Activated CD8-positive, alpha-beta T cell treated with anti-CD3 and anti-CD28 coated beads for 36 hours (primary cell): ENCODE measurements at regions of chr19 and their contacts with region 1.

Region 1: GRCh38 chr19:15297416-15298224 is 34.7 kb downstream of the BRD4 start:
- DNase-seq: peak; percentile 52
- ATAC-seq: peak; percentile 10
- H3K4me3 Mint-ChIP-seq: peak overlapping the region; percentile 38
- H3K27ac Mint-ChIP-seq: peak overlapping the region; percentile 88
- H3K4me1 Mint-ChIP-seq: peaks cover 92% of the 10 kb centered on the region
- H3K27me3 Mint-ChIP-seq: no peaks in the 10 kb centered on the region
- CTCF ChIP-seq: no peak

Region 2: GRCh38 chr19:15283141-15283901 is 14.3 kb before region 1 on chr19:
- CTCF ChIA-PET with region 1: interaction called, 3 read pairs
- POLR2A ChIA-PET with region 1: interaction called, 10 read pairs
- intact Hi-C with region 1: no loop called
- DNase-seq: peak; percentile 50
- ATAC-seq: peak; percentile 52
- H3K4me3 Mint-ChIP-seq: peak overlapping the region; percentile 12
- H3K27ac Mint-ChIP-seq: peak overlapping the region; percentile 84
- H3K4me1 Mint-ChIP-seq: peaks cover 93% of the 10 kb centered on the region
- H3K27me3 Mint-ChIP-seq: no peaks in the 10 kb centered on the region
- CTCF ChIP-seq: no peak

Region 3: GRCh38 chr19:15318241-15318691 is 20.6 kb after region 1 on chr19:
- CTCF ChIA-PET with region 1: interaction called, 3 read pairs
- POLR2A ChIA-PET with region 1: interaction called, 10 read pairs
- intact Hi-C with region 1: no loop called
- DNase-seq: peak; percentile 45
- ATAC-seq: peak; percentile 60
- H3K4me3 Mint-ChIP-seq: peak overlapping the region; percentile 7
- H3K27ac Mint-ChIP-seq: peak overlapping the region; percentile 76
- H3K4me1 Mint-ChIP-seq: peaks cover 84% of the 10 kb centered on the region
- H3K27me3 Mint-ChIP-seq: no peaks in the 10 kb centered on the region
- CTCF ChIP-seq: no peak

Region 4: DNA sequence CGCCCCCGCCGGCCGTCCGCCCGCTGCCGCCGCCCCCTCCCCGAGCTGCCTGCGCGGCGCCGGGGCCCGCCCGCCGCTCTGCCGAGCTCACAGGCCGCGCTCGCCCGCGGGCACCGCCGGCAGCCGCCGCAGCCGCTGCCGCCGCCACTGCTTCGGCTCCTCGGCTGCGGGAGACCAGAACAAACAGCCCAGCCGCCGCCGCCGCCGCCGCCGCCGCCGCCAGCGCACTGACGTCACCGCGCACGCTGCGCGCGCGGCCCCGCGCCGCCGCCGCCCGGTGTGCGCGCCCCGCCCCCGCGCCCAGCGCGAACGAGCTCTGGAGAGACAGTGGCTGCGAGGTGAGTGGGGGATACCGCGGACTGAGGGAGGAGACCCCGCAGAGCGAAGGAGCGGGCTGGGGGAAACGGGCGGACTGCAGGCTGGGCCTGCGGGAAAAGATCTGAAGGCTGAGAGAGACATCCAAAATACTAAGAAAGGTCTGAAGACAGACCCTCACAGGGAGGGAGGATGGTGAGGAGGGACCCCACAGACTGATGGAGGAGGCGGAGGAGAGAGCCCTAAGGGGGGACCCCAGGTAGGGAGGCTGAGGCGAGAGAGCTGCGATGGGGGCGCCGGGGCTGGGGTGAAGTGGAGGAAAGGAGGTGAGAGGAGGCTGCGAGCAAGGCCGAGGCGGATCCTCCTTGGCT is 34.8 kb after region 1 on chr19 and contains the start of gene BRD4:
- CTCF ChIA-PET with region 1: interaction called, 3 read pairs
- POLR2A ChIA-PET with region 1: interaction called, 6 read pairs
- intact Hi-C with region 1: loop called (anchors 5 kb)
- DNase-seq: peak; percentile 78
- ATAC-seq: peak; percentile 59
- H3K4me3 Mint-ChIP-seq: peak within 1 kb of the TSS; percentile 89
- H3K27ac Mint-ChIP-seq: peak within 1 kb of the TSS; percentile 97
- H3K4me1 Mint-ChIP-seq: peaks cover 31% of the 10 kb centered on the region
- H3K27me3 Mint-ChIP-seq: no peaks in the 10 kb centered on the region
- CTCF ChIP-seq: no peak
- total RNA-seq, gene BRD4: 94.3 to 99.6 TPM